Activated CD4-positive, alpha-beta memory T cell treated with anti-CD3 and anti-CD28 coated beads, Interleukin-2, amount 10 ng/mL, durations not matched to agents 7 days and 5 days (primary cell): ENCODE measurements at regions of chr19 and their contacts with region 1.

Region 1: DNA sequence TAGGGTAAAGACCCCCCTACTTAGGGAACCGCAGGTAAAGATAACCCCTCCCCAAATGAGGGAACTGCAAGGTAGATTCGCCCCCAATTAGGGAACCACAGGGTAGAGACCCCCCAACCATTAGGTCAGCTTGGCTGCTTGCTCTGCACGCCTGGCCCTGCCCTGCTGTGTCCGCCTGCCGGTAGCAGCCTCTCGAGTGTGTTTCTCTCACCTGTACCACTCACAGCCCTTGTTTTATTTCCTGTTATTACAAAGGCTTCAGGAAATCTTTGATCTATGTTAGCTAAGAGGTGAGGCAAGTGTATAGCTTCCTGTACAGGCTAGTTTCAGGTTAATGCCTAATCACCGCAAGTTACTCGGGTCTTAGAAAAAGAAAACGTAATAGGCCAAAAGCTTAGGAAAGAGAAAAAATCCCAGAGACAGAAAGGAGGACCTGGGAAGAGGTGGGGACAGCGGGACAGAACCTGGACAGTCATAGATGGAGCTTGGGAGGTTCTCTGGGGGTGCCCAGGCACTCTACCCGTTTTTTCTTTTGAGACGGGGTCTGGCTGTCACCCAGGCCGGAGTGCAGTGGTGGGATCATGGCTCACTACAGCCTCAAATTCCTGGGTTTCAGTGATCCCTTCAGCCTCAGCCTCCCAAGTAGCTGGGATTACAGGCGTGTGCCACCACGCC is 23.1 kb upstream of the EIF3G start:
- DNase-seq: peak; percentile 50
- H3K4me3 Mint-ChIP-seq: peak overlapping the region; percentile 59
- H3K27ac Mint-ChIP-seq: peak overlapping the region; percentile 97
- H3K4me1 Mint-ChIP-seq: peaks cover 37% of the 10 kb centered on the region
- H3K27me3 Mint-ChIP-seq: no peaks in the 10 kb centered on the region

Region 2: DNA sequence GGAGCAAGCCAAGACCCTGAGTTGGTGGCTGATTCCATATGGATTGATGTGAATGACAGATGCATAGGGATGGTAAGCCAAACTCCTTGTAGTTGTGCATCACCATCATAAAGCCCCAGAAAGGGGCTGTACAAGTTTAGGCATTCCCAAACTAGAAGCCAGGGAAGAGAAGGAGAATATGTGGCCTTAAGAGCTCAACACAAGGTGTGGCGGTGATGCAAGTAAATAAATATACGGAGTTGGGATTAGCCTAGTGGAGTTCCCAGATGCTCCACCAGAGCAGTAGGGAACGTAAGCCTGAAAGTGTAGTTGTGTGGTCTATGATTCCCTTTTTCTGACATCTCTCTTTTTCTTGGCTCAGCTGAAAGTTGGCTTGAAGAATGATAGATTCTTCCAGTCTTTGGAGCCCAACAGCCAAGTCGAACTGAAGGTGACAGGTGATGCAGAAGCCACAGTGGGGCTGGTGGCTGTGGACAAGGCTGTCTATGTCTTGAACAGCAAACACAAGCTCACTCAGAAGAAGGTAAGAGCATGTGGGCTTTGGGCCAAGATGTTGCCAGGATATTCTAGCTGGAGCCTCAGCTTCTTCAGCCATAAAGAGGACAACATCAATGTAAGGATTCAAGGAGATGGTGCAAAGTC is 99.4 kb before region 1 on chr19:
- CTCF ChIA-PET with region 1: no interaction called
- POLR2A ChIA-PET with region 1: no interaction called
- DNase-seq: no peak
- H3K4me3 Mint-ChIP-seq: no peak overlapping the region
- H3K27ac Mint-ChIP-seq: no peak overlapping the region
- H3K4me1 Mint-ChIP-seq: no peaks in the 10 kb centered on the region
- H3K27me3 Mint-ChIP-seq: peaks cover 13% of the 10 kb centered on the region

Region 3: GRCh38 chr19:10106100-10106936 is 36.5 kb before region 1 on chr19 and contains the start of gene PPAN:
- CTCF ChIA-PET with region 1: interaction called, 6 read pairs
- POLR2A ChIA-PET with region 1: interaction called, 14 read pairs
- DNase-seq: peak; percentile 98
- H3K4me3 Mint-ChIP-seq: peak within 1 kb of the TSS; percentile 88
- H3K27ac Mint-ChIP-seq: peak within 1 kb of the TSS; percentile 97
- H3K4me1 Mint-ChIP-seq: peaks cover 79% of the 10 kb centered on the region
- H3K27me3 Mint-ChIP-seq: no peaks in the 10 kb centered on the region
- total RNA-seq, gene PPAN: 74.3 to 75.6 TPM

Region 4: DNA sequence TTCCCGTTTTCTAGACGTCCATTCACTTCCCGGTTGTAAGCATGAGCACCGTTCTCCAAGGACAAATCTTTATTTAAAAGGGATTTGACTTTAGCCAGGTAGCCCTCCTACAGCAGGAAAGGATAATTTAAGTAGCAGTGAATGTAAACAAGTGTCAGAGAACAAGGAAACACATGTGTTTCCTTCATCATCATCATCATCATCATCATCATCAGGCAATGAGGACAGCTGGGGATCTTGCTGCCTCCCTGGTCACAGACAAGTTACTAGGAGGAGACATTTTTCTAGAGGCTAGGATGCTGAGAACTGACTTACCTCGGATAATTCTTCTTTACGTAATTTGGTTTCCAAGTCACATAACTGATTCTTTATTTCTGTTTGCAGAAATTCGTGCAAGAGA is 37.6 kb after region 1 on chr19:
- CTCF ChIA-PET with region 1: no interaction called
- POLR2A ChIA-PET with region 1: no interaction called
- DNase-seq: no peak
- H3K4me3 Mint-ChIP-seq: no peak overlapping the region
- H3K27ac Mint-ChIP-seq: no peak overlapping the region
- H3K4me1 Mint-ChIP-seq: peaks cover 8% of the 10 kb centered on the region
- H3K27me3 Mint-ChIP-seq: no peaks in the 10 kb centered on the region

Region 5: GRCh38 chr19:10279737-10280442 is 137.1 kb after region 1 on chr19:
- CTCF ChIA-PET with region 1: no interaction called
- POLR2A ChIA-PET with region 1: no interaction called
- DNase-seq: no peak
- H3K4me3 Mint-ChIP-seq: no peak overlapping the region
- H3K27ac Mint-ChIP-seq: peak overlapping the region; percentile 61
- H3K4me1 Mint-ChIP-seq: peaks cover 27% of the 10 kb centered on the region
- H3K27me3 Mint-ChIP-seq: no peaks in the 10 kb centered on the region